ENCODE measurements at regions of chr2 and their contacts with region 1.

Region 1: DNA sequence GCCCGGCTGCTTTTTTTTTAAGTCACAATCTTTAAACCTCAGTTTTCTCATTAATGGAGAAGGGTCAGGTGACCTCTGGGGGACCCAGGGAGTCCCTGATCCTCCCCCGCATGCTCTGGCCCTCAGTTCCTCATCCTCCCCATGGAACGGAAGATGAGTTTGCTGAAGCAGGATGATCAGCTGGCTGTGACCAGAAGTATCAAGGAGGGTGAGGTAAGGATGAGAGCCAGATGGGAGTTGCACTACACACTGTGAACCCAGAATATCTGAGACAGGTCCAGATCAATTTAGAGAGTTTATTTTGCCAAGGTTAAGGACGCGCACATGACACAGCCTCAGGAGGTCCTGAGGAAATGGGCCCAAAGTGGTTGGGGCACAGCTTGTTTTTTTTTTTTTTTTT is 3.8 kb downstream of the CATIP start:
- DNase-seq: no peak
- H3K4me3 Mint-ChIP-seq: no peak overlapping the region
- H3K27ac Mint-ChIP-seq: no peak overlapping the region
- H3K4me1 Mint-ChIP-seq: no peaks in the 10 kb centered on the region
- H3K27me3 Mint-ChIP-seq: no peaks in the 10 kb centered on the region
- CTCF ChIP-seq: no peak

Region 2: GRCh38 chr2:218172845-218173244 is 187.6 kb before region 1 on chr2:
- CTCF ChIA-PET with region 1: no interaction called
- POLR2A ChIA-PET with region 1: no interaction called
- intact Hi-C with region 1: no loop called
- DNase-seq: no peak
- H3K4me3 Mint-ChIP-seq: no peak overlapping the region
- H3K27ac Mint-ChIP-seq: no peak overlapping the region
- H3K4me1 Mint-ChIP-seq: no peaks in the 10 kb centered on the region
- H3K27me3 Mint-ChIP-seq: peaks cover 11% of the 10 kb centered on the region
- CTCF ChIP-seq: no peak

Region 3: GRCh38 chr2:218186355-218186766 is 174.1 kb before region 1 on chr2:
- CTCF ChIA-PET with region 1: interaction called, 3 read pairs
- POLR2A ChIA-PET with region 1: no interaction called
- intact Hi-C with region 1: loop called (anchors 1 kb)
- DNase-seq: peak; percentile 82
- H3K4me3 Mint-ChIP-seq: no peak overlapping the region
- H3K27ac Mint-ChIP-seq: no peak overlapping the region
- H3K4me1 Mint-ChIP-seq: peaks cover 6% of the 10 kb centered on the region
- H3K27me3 Mint-ChIP-seq: no peaks in the 10 kb centered on the region
- CTCF ChIP-seq: peak; percentile 84

Region 4: GRCh38 chr2:218286570-218287459 is 73.6 kb before region 1 on chr2:
- CTCF ChIA-PET with region 1: interaction called, 19 read pairs
- POLR2A ChIA-PET with region 1: interaction called, 4 read pairs
- intact Hi-C with region 1: no loop called
- DNase-seq: peak; percentile 97
- H3K4me3 Mint-ChIP-seq: peak overlapping the region; percentile 80
- H3K27ac Mint-ChIP-seq: peak overlapping the region; percentile 99
- H3K4me1 Mint-ChIP-seq: peaks cover 57% of the 10 kb centered on the region
- H3K27me3 Mint-ChIP-seq: no peaks in the 10 kb centered on the region
- CTCF ChIP-seq: no peak

Region 5: GRCh38 chr2:218301176-218301819 is 59.1 kb before region 1 on chr2:
- CTCF ChIA-PET with region 1: interaction called, 110 read pairs
- POLR2A ChIA-PET with region 1: interaction called, 6 read pairs
- intact Hi-C with region 1: loop called (anchors 1 kb)
- DNase-seq: peak; percentile 90
- H3K4me3 Mint-ChIP-seq: no peak overlapping the region
- H3K27ac Mint-ChIP-seq: no peak overlapping the region
- H3K4me1 Mint-ChIP-seq: peaks cover 16% of the 10 kb centered on the region
- H3K27me3 Mint-ChIP-seq: no peaks in the 10 kb centered on the region
- CTCF ChIP-seq: peak; percentile 91

Region 6: DNA sequence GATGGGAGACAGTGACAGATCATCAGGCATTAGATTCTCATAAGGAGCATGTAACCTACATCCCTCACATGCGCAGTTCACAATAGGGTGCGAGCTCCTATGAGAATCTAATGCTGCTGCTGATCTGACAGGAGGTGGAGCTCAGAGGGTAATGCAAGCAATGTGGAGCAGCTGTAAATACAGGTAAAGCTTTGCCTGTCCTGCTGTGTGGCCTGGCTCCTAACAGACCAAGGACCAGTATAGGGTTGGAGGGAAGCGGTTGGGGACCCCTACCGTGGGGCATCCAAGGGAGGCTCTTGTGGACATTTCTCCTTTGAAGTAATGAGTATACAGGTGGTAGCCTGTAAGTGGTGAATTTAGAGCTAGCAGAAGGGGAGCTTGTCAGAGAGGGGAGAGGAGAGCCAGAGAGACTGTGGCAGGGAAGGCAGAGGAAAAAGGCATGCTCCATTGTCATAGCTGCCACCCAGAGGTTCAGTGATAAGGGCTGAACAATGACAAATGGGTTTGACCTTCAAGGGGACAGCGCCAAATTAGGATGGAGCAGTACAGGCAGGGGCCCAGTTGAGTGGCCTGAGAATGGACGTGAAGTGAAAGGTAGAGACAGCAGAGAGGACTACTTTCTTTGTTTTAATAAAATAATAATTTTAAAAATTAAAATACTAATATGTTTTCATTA is 52.9 kb before region 1 on chr2:
- CTCF ChIA-PET with region 1: interaction called, 110 read pairs
- POLR2A ChIA-PET with region 1: interaction called, 4 read pairs
- intact Hi-C with region 1: no loop called
- DNase-seq: no peak
- H3K4me3 Mint-ChIP-seq: no peak overlapping the region
- H3K27ac Mint-ChIP-seq: no peak overlapping the region
- H3K4me1 Mint-ChIP-seq: no peaks in the 10 kb centered on the region
- H3K27me3 Mint-ChIP-seq: no peaks in the 10 kb centered on the region
- CTCF ChIP-seq: no peak

Region 7: DNA sequence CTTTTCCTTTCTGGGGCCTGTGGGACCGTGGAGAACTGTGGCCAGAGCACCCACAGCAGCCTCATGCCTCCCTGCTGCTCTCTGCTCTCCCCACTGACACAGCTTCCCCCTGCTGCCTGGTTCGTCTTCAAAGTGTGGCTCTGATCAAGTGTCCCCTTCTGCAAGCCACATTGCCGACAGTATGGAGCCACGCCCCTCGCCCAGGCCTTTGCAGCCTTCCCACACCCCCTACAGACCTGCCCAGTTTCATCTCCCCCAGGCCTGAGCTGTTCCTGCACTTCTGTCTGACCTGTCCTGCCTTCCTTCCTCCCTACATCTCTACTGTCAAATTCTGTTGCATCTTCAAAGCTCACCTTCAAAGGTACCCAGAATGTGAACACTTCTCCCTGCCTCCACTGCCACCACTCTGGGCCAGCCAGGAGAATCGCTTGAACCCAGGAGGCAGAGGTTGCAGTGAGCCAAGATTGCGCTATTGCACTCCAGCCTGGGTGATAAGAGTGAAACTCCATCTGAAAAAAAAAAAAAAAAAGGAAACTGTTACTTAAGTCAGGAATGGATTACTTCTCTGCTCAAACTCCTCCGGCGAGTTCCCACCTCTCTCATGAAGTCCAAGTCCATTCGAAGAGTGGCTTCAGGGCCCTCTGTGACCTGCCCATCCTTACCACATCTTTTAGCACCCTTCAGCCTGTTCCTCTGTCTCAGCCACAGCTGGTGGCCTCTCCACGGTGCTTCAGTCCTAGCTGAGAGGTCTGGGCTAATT is 32.8 kb before region 1 on chr2:
- CTCF ChIA-PET with region 1: interaction called, 10 read pairs
- POLR2A ChIA-PET with region 1: no interaction called
- intact Hi-C with region 1: no loop called
- DNase-seq: no peak
- H3K4me3 Mint-ChIP-seq: no peak overlapping the region
- H3K27ac Mint-ChIP-seq: peak overlapping the region; percentile 54
- H3K4me1 Mint-ChIP-seq: peaks cover 11% of the 10 kb centered on the region
- H3K27me3 Mint-ChIP-seq: no peaks in the 10 kb centered on the region
- CTCF ChIP-seq: no peak

Region 8: DNA sequence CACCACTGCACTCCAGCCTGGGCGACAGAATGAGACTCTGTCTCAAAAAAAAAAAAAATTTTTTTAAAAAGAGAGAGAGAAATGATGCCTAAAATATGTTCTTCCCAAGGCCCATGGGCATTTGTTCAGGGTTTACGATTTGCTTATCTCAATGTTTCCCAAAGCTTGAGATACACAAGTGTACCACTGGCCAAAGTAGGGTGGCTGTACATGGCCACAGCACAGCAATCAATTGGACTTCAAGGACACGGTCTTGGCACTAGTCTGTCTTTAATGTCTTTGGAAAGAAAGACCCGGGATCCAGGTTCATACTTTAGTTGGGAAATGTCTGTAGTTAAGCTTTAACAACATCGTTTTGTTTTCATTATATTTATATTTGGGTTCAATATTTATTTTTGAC is 13.3 kb before region 1 on chr2:
- CTCF ChIA-PET with region 1: interaction called, 17 read pairs
- POLR2A ChIA-PET with region 1: no interaction called
- intact Hi-C with region 1: no loop called
- DNase-seq: no peak
- H3K4me3 Mint-ChIP-seq: no peak overlapping the region
- H3K27ac Mint-ChIP-seq: no peak overlapping the region
- H3K4me1 Mint-ChIP-seq: no peaks in the 10 kb centered on the region
- H3K27me3 Mint-ChIP-seq: no peaks in the 10 kb centered on the region
- CTCF ChIP-seq: no peak

Region 9: DNA sequence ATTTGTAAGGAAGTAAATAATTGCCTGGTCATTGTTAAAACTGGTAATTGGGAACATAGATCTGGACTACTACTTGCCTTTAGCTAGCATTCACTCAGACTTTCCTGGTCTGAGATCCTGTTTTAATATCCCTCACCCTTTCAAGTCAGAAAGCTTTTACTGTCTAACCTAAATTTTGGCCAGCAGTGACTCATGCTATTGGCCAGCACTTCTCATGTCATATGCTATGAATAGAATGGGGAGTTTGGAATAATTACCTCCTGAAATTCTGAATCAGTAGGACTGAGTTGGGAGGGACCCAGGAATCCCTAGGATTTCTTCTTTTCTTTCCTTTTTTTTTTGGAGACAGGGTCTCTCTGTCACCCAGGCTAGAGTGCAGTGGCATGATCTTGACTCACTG is 330.8 kb after region 1 on chr2:
- CTCF ChIA-PET with region 1: no interaction called
- POLR2A ChIA-PET with region 1: no interaction called
- intact Hi-C with region 1: no loop called
- DNase-seq: no peak
- H3K4me3 Mint-ChIP-seq: no peak overlapping the region
- H3K27ac Mint-ChIP-seq: no peak overlapping the region
- H3K4me1 Mint-ChIP-seq: peaks cover 6% of the 10 kb centered on the region
- H3K27me3 Mint-ChIP-seq: no peaks in the 10 kb centered on the region
- CTCF ChIP-seq: no peak

Region 10: GRCh38 chr2:218953481-218953881 is 593.0 kb after region 1 on chr2:
- CTCF ChIA-PET with region 1: no interaction called
- POLR2A ChIA-PET with region 1: no interaction called
- intact Hi-C with region 1: no loop called
- DNase-seq: no peak
- H3K4me3 Mint-ChIP-seq: no peak overlapping the region
- H3K27ac Mint-ChIP-seq: no peak overlapping the region
- H3K4me1 Mint-ChIP-seq: no peaks in the 10 kb centered on the region
- H3K27me3 Mint-ChIP-seq: peaks cover 71% of the 10 kb centered on the region
- CTCF ChIP-seq: no peak